ENCODE measurements at regions of chr20 and their contacts with region 1.

Region 1: GRCh38 chr20:24992487-24993205 is at the start of gene APMAP:
- DNase-seq: peak; percentile 90
- H3K4me3 ChIP-seq: peak within 1 kb of the TSS; percentile 33 to 66 (median 58)
- H3K27ac ChIP-seq: peak within 1 kb of the TSS; percentile 73
- H3K4me1 ChIP-seq: peaks cover 19% of the 10 kb centered on the region
- H3K27me3 ChIP-seq: peaks cover 0 to 2% of the 10 kb centered on the region in 2 experiments
- CTCF ChIP-seq: no peak
- POLR2A ChIP-seq: peak; percentile 96
- total RNA-seq, gene APMAP: 105 and 110 TPM in 2 replicates

Region 2: DNA sequence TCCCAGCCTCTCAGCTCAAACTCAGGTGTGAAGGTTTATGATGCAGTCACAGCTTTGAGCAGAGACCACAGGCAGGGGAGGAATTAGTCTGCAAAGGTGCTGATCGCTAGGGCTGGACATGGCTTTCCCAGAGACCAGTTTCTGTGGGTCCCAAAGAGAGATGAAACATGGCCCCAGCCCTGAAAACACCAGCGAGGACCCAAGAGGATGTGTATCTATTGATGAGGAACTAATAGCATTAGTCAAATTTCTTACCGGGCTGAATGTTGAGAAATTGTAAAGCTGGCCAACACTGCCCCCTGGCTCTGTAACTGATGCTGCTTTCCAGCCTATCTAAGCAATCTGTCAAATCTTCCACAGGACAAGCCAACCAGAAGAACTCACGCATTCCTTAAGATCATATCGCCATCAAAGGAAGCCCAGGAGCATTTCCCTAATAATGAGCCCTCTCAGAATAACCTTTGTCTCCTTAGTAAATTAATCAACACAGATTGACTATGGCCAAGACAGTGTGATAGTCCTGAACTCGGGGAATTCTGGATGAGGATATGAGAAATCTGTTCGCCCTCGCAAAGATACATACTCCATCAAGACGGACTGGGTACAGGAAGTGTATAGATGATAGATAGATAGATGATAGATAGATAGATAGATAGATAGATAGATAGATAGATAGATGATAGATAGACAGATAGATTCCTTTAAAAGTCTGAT is 73.1 kb after region 1 on chr20:
- CTCF ChIA-PET with region 1: interaction called, 96 read pairs
- POLR2A ChIA-PET with region 1: no interaction called
- dilution Hi-C with region 1: no loop called
- intact Hi-C with region 1: loop called (anchors 1 kb)
- DNase-seq: peak; percentile 67
- H3K4me3 ChIP-seq: no peak overlapping the region
- H3K27ac ChIP-seq: no peak overlapping the region
- H3K4me1 ChIP-seq: no peaks in the 10 kb centered on the region
- H3K27me3 ChIP-seq: peaks cover 7 to 10% of the 10 kb centered on the region in 2 experiments
- CTCF ChIP-seq: peak; percentile 59 to 71
- POLR2A ChIP-seq: no peak

Region 3: GRCh38 chr20:25195014-25195961 is 202.6 kb after region 1 on chr20 and contains the start of gene ENTPD6:
- CTCF ChIA-PET with region 1: no interaction called
- POLR2A ChIA-PET with region 1: no interaction called
- dilution Hi-C with region 1: no loop called
- intact Hi-C with region 1: loop called (anchors 1 kb)
- DNase-seq: peak; percentile 91
- H3K4me3 ChIP-seq: peak within 1 kb of the TSS; percentile 60 to 89 (median 79)
- H3K27ac ChIP-seq: peak within 1 kb of the TSS; percentile 46
- H3K4me1 ChIP-seq: peaks cover 5% of the 10 kb centered on the region
- H3K27me3 ChIP-seq: peaks cover 6 to 13% of the 10 kb centered on the region in 2 experiments
- CTCF ChIP-seq: peak in 1 of 2 donors; percentile 30
- POLR2A ChIP-seq: peak; percentile 89
- total RNA-seq, gene ENTPD6: 51.2 and 52.2 TPM in 2 replicates

Region 4: DNA sequence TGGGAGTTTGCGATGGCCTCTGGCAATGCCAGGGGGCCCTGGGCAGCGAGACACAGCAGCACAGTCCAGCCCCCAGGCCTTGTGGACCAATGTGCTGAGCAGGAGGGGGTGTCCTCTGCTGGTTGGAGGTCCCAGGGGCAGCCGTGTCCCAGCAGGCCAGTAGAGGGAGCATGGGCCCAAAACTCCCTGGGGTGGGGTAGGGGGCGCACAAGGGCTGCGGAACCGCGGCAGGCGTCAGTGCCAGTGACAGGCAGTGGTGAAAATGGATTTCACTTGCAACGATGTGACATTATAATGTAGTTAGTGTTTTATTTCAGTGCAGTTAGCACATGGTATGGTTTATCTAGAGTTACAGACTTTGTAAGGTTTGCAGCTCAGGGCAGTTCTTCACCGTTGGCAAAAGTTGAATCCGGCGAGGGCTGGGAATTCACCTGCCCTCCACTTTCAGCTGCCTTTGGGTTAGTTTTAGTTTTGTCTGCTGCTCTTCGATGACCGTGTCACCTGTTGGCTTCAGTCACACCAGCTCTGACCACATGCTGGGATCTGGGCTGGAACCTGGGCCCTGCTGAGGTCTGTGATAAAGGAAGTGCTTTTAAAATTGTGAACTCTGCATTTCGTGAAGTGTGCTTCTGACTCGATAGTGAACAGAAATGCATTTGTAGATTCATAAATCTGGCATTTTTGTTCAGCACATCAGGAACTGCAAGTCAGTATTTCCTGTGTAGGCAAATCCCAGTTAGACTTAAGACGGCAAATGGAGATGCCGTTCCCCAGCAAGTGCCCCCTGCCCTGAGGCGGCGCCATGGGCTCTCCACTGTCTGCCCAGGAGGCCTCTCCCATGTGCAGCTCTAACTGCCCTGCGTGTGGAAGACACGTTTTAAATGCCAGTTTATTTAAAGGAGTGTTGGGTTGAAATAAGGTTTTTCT is 302.1 kb after region 1 on chr20:
- CTCF ChIA-PET with region 1: no interaction called
- POLR2A ChIA-PET with region 1: no interaction called
- dilution Hi-C with region 1: no loop called
- intact Hi-C with region 1: loop called (anchors 1 kb)
- DNase-seq: peak; percentile 71
- H3K4me3 ChIP-seq: no peak overlapping the region
- H3K27ac ChIP-seq: no peak overlapping the region
- H3K4me1 ChIP-seq: no peaks in the 10 kb centered on the region
- H3K27me3 ChIP-seq: no peaks in the 10 kb centered on the region
- CTCF ChIP-seq: peak; percentile 93 to 98
- POLR2A ChIP-seq: no peak

Region 5: GRCh38 chr20:25399037-25399430 is 406.4 kb after region 1 on chr20:
- CTCF ChIA-PET with region 1: interaction called, 48 read pairs
- POLR2A ChIA-PET with region 1: no interaction called
- dilution Hi-C with region 1: no loop called
- intact Hi-C with region 1: loop called (anchors 1 kb)
- DNase-seq: peak; percentile 79
- H3K4me3 ChIP-seq: no peak overlapping the region
- H3K27ac ChIP-seq: no peak overlapping the region
- H3K4me1 ChIP-seq: no peaks in the 10 kb centered on the region
- H3K27me3 ChIP-seq: peaks cover 0 to 1% of the 10 kb centered on the region in 2 experiments
- CTCF ChIP-seq: peak; percentile 35
- POLR2A ChIP-seq: no peak